Activated CD4-positive, alpha-beta memory T cell treated with anti-CD3 and anti-CD28 coated beads for 36 hours (primary cell): ENCODE measurements at regions of chr17 and their contacts with region 1.

Region 1: GRCh38 chr17:16438557-16439302 is 23.4 kb downstream of the TRPV2 start:
- DNase-seq: peak; percentile 98
- H3K4me3 Mint-ChIP-seq: peak overlapping the region; percentile 96
- H3K27ac Mint-ChIP-seq: peak overlapping the region; percentile 97
- H3K4me1 Mint-ChIP-seq: peaks cover 44% of the 10 kb centered on the region
- H3K27me3 Mint-ChIP-seq: no peaks in the 10 kb centered on the region

Region 2: GRCh38 chr17:16232391-16232790 is 206.3 kb before region 1 on chr17:
- CTCF ChIA-PET with region 1: no interaction called
- POLR2A ChIA-PET with region 1: no interaction called
- intact Hi-C with region 1: loop called (anchors 1 kb)
- DNase-seq: no peak
- H3K4me3 Mint-ChIP-seq: no peak overlapping the region
- H3K27ac Mint-ChIP-seq: no peak overlapping the region
- H3K4me1 Mint-ChIP-seq: peaks cover 19% of the 10 kb centered on the region
- H3K27me3 Mint-ChIP-seq: no peaks in the 10 kb centered on the region

Region 3: DNA sequence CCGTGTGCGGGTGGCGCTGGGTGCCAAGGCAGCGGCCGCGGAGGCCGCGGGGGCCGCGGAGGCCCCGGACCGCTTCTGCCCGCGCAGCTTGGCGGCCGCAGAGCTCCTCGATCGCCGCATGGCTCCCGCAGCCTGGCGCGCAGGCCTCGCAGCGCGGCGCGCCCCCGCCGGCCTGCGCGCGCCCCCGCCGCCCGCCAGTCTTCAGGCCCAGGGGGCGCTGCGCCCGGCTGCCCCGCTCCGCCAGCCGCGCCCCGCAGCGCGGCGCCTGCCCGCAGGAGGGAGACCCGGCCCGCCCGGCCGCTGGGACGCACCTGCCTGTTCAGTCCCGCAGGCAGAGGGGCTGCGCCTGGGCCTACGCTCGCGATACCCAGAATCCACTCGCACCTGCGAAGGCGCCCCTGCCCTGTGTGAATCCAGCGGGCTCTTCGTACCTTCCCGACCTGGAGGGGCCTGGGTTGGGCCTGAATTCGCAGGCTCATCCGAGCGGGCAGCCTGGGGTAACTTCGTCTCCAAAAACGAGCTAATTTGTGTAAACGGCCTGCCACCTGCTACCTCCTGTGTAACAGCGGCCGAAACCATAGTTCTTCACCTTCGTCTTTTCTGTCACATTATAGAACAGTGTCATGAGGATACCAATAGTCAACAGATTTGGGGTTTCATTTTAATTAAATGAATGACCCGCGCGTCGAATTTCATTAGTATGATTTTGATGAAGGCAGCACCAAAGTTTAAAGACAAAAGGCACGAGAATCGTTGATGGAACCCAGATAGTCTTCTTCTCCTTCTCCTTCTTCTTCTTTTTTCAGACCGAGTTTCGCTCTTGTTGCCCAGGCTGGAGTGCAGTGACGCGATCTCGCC is 85.2 kb before region 1 on chr17 and contains the start of gene CENPV:
- CTCF ChIA-PET with region 1: interaction called, 8 read pairs
- POLR2A ChIA-PET with region 1: interaction called, 9 read pairs
- intact Hi-C with region 1: loop called (anchors 2 kb)
- DNase-seq: peak; percentile 69
- H3K4me3 Mint-ChIP-seq: peak within 1 kb of the TSS; percentile 87
- H3K27ac Mint-ChIP-seq: peak within 1 kb of the TSS; percentile 28
- H3K4me1 Mint-ChIP-seq: peaks cover 22% of the 10 kb centered on the region
- H3K27me3 Mint-ChIP-seq: no peaks in the 10 kb centered on the region
- total RNA-seq, gene CENPV: 43.0 to 44.2 TPM

Region 4: DNA sequence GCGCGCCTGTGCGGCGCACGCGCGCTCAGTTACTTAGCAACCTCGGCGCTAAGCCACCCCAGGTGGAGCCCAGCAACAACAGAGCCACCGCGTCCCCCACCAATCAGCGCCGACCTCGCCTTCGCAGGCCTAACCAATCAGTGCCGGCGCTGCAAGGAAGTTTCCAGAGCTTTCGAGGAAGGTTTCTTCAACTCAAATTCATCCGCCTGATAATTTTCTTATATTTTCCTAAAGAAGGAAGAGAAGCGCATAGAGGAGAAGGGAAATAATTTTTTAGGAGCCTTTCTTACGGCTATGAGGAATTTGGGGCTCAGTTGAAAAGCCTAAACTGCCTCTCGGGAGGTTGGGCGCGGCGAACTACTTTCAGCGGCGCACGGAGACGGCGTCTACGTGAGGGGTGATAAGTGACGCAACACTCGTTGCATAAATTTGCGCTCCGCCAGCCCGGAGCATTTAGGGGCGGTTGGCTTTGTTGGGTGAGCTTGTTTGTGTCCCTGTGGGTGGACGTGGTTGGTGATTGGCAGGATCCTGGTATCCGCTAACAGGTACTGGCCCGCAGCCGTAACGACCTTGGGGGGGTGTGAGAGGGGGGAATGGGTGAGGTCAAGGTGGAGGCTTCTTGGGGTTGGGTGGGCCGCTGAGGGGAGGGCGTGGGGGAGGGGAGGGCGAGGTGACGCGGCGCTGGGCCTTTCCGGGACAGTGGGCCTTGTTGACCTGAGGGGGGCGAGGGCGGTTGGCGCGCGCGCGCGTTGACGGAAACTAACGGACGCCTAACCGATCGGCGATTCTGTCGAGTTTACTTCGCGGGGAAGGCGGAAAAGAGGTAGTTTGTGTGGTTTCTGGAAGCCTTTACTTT is 57.9 kb before region 1 on chr17 and contains the start of gene UBB:
- CTCF ChIA-PET with region 1: interaction called, 4 read pairs
- POLR2A ChIA-PET with region 1: interaction called, 53 read pairs
- intact Hi-C with region 1: loop called (anchors 1 kb)
- DNase-seq: peak; percentile 98
- H3K4me3 Mint-ChIP-seq: peak within 1 kb of the TSS; percentile 93
- H3K27ac Mint-ChIP-seq: peak within 1 kb of the TSS; percentile 99
- H3K4me1 Mint-ChIP-seq: peaks cover 40% of the 10 kb centered on the region
- H3K27me3 Mint-ChIP-seq: no peaks in the 10 kb centered on the region
- total RNA-seq, gene UBB: 1,695 to 1,771 TPM

Region 5: GRCh38 chr17:16398270-16399267 is 40.2 kb before region 1 on chr17:
- CTCF ChIA-PET with region 1: no interaction called
- POLR2A ChIA-PET with region 1: no interaction called
- intact Hi-C with region 1: no loop called
- DNase-seq: peak; percentile 56
- H3K4me3 Mint-ChIP-seq: no peak overlapping the region
- H3K27ac Mint-ChIP-seq: peak overlapping the region; percentile 42
- H3K4me1 Mint-ChIP-seq: peaks cover 8% of the 10 kb centered on the region
- H3K27me3 Mint-ChIP-seq: no peaks in the 10 kb centered on the region

Region 6: GRCh38 chr17:16428098-16428882 is 10.4 kb before region 1 on chr17:
- CTCF ChIA-PET with region 1: interaction called, 18 read pairs
- POLR2A ChIA-PET with region 1: interaction called, 18 read pairs
- intact Hi-C with region 1: no loop called
- DNase-seq: peak; percentile 66
- H3K4me3 Mint-ChIP-seq: no peak overlapping the region
- H3K27ac Mint-ChIP-seq: no peak overlapping the region
- H3K4me1 Mint-ChIP-seq: no peaks in the 10 kb centered on the region
- H3K27me3 Mint-ChIP-seq: no peaks in the 10 kb centered on the region

Region 7: DNA sequence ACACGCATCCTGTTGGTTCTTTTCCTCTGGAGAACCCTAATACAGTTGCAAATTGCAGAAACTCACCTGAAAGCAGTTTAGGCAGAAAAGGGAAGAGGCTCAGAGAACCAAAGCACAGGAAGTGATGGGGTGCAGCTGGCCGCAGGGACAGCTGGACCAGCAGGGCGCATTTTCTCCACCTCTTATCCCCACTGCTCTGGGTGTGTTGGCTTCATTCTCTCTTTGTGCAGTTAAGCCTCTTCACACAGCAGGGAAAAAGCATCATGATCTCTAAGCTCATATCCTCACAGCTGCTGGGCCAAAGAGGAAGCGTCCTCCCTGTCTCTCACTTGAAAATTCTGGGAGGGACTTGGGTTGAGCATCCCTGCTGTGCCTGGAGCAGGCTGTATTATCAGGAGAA is 73.3 kb after region 1 on chr17:
- CTCF ChIA-PET with region 1: no interaction called
- POLR2A ChIA-PET with region 1: no interaction called
- intact Hi-C with region 1: no loop called
- DNase-seq: no peak
- H3K4me3 Mint-ChIP-seq: no peak overlapping the region
- H3K27ac Mint-ChIP-seq: no peak overlapping the region
- H3K4me1 Mint-ChIP-seq: no peaks in the 10 kb centered on the region
- H3K27me3 Mint-ChIP-seq: peaks cover 8% of the 10 kb centered on the region

Region 8: GRCh38 chr17:16537130-16537458 is 98.4 kb after region 1 on chr17:
- CTCF ChIA-PET with region 1: interaction called, 4 read pairs
- POLR2A ChIA-PET with region 1: interaction called, 9 read pairs
- intact Hi-C with region 1: loop called (anchors 1 kb)
- DNase-seq: no peak
- H3K4me3 Mint-ChIP-seq: no peak overlapping the region
- H3K27ac Mint-ChIP-seq: no peak overlapping the region
- H3K4me1 Mint-ChIP-seq: peaks cover 14% of the 10 kb centered on the region
- H3K27me3 Mint-ChIP-seq: peaks cover 2% of the 10 kb centered on the region